Naive thymus-derived CD4-positive, alpha-beta T cell (primary cell): ENCODE measurements at regions of chr5 and their contacts with region 1.

Region 1: GRCh38 chr5:172833686-172834414 is at the start of gene ERGIC1:
- DNase-seq: peak; percentile 49 to 84 (median 58)
- ATAC-seq: peak; percentile 87
- H3K4me3 ChIP-seq: peak within 1 kb of the TSS; percentile 68
- H3K4me3 Mint-ChIP-seq: peak within 1 kb of the TSS; percentile 85 to 93 (median 90)
- H3K27ac ChIP-seq: peak within 1 kb of the TSS; percentile 87
- H3K27ac Mint-ChIP-seq: peak within 1 kb of the TSS; percentile 87 to 97 (median 94)
- H3K4me1 ChIP-seq: peaks cover 23 to 38% of the 10 kb centered on the region in 2 donors
- H3K4me1 Mint-ChIP-seq: peaks cover 25 to 50% (median 40%) of the 10 kb centered on the region in 7 donors
- H3K27me3 ChIP-seq: no peaks in the 10 kb centered on the region
- H3K27me3 Mint-ChIP-seq: no peaks in the 10 kb centered on the region
- total RNA-seq, gene ERGIC1: 44.4 to 71.3 (median 53.5) TPM

Region 2: DNA sequence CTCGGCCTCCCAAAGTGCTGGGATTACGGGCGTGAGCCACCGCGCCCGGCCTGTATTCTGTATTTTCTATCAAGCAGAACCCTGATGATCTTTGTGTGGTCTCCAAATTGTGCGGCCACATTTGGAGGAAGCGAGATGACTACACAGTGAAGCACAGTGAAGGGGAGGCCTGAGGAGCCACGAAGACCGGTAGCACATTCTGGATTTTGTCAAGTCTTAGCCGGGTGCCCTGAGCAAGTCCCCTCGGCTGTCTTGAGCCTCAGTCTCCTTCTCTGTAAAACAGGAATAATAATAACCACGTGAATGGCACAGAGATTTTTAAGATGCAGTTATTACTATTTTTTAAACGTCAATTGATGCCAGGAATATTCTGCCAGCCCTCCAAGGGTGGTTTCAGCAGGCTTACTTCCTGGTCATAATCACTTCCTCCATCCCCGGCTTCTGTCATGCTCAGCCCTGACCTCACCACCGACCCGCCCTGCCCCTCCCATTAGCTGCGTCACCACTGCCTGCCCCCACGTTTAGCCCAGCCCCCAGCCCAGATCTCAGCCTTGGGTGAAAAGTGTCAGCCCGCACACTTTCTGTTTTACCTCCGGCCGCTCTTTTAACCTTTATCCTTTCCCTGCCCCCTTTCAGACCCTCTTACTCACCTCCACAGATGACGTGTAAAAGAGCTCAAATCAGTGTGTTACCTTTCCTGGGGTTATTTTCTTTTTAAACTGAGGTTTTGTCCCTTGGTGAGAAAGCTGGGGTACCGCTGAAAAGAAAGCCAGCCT is 26.8 kb before region 1 on chr5:
- CTCF ChIA-PET with region 1: interaction called, 3 read pairs
- POLR2A ChIA-PET with region 1: interaction called, 4 read pairs
- intact Hi-C with region 1: loop called (anchors 1 to 2 kb)
- DNase-seq: peak; percentile 24 to 78 (median 52)
- ATAC-seq: peak; percentile 98
- H3K4me3 ChIP-seq: peak overlapping the region; percentile 45
- H3K4me3 Mint-ChIP-seq: peak overlapping the region; percentile 73 to 87 (median 84)
- H3K27ac ChIP-seq: peak overlapping the region; percentile 74
- H3K27ac Mint-ChIP-seq: peak overlapping the region; percentile 86 to 98 (median 93)
- H3K4me1 ChIP-seq: peaks cover 0 to 12% of the 10 kb centered on the region in 2 donors
- H3K4me1 Mint-ChIP-seq: peaks cover 9 to 17% (median 13%) of the 10 kb centered on the region in 7 donors
- H3K27me3 ChIP-seq: no peaks in the 10 kb centered on the region
- H3K27me3 Mint-ChIP-seq: peaks cover 0 to 2% (median 0%) of the 10 kb centered on the region in 5 donors